ENCODE measurements at regions of chr7 and their contacts with region 1.

Region 1: GRCh38 chr7:6589829-6590644 is at the start of gene INTS15:
- DNase-seq: peak; percentile 84
- H3K27ac ChIP-seq: peak within 1 kb of the TSS; percentile 84
- CTCF ChIP-seq: peak; percentile 95

Region 2: GRCh38 chr7:6577365-6578113 is 12.5 kb before region 1 on chr7 and contains the start of gene ZDHHC4:
- CTCF ChIA-PET with region 1: interaction called, 12 read pairs
- POLR2A ChIA-PET with region 1: interaction called, 7 read pairs
- DNase-seq: peak; percentile 97
- H3K27ac ChIP-seq: peak within 1 kb of the TSS; percentile 87
- CTCF ChIP-seq: no peak